AG04450 (cell line): ENCODE measurements at regions of chr17 and their contacts with region 1.

Region 1: DNA sequence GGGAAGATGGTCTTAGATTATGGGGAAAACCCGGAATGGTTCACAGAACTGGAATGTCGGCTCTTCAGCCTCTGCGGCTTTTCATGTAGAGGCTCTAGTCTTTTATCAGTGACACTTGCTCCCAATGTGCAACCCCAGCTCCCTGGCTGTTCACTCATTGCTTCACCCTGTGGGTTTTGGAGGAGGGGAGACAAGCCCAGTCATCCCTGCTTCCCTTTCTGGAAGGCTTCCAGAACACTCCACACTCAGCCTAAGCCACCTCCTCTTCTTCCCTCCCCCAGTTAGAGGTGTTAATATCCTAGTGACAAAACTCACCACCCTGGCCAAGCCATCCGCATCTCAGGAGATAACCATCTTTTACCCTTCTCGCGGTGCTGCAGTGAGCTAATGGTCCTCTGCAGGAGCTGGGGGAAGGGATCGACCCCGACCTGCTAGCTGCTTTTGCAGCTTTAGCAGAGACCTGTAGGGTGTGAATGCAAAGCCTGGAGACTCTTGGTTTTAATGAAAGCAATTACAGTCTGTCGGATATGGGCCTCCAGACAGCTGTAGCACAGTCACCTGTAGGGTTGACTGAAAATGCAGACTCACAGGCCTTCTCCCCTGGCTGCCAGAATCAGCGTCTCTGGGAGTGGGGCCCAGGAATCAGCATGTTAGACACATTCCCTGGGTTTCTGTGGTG is 24.3 kb upstream of the LASP1NB start:
- DNase-seq: peak; percentile 88
- H3K4me3 ChIP-seq: no peak overlapping the region
- H3K27ac ChIP-seq: peak overlapping the region; percentile 40
- H3K27me3 ChIP-seq: no peaks in the 10 kb centered on the region
- CTCF ChIP-seq: no peak

Region 2: GRCh38 chr17:38879878-38880682 is 21.0 kb before region 1 on chr17:
- CTCF ChIA-PET with region 1: no interaction called
- POLR2A ChIA-PET with region 1: interaction called, 20 read pairs
- DNase-seq: no peak
- H3K4me3 ChIP-seq: peak overlapping the region; percentile 12; the same call in 1 of the 2 replicates
- H3K27ac ChIP-seq: peak overlapping the region; percentile 69
- H3K27me3 ChIP-seq: no peaks in the 10 kb centered on the region
- CTCF ChIP-seq: no peak

Region 3: GRCh38 chr17:39538866-39539265 is 637.7 kb after region 1 on chr17:
- CTCF ChIA-PET with region 1: no interaction called
- POLR2A ChIA-PET with region 1: no interaction called
- DNase-seq: no peak
- H3K4me3 ChIP-seq: no peak overlapping the region
- H3K27ac ChIP-seq: no peak overlapping the region
- H3K27me3 ChIP-seq: no peaks in the 10 kb centered on the region
- CTCF ChIP-seq: no peak